Activated B cell treated with CpG ODN at 0.5 μM for 24 hours (primary cell): ENCODE measurements at regions of chr18 and their contacts with region 1.

Region 1: DNA sequence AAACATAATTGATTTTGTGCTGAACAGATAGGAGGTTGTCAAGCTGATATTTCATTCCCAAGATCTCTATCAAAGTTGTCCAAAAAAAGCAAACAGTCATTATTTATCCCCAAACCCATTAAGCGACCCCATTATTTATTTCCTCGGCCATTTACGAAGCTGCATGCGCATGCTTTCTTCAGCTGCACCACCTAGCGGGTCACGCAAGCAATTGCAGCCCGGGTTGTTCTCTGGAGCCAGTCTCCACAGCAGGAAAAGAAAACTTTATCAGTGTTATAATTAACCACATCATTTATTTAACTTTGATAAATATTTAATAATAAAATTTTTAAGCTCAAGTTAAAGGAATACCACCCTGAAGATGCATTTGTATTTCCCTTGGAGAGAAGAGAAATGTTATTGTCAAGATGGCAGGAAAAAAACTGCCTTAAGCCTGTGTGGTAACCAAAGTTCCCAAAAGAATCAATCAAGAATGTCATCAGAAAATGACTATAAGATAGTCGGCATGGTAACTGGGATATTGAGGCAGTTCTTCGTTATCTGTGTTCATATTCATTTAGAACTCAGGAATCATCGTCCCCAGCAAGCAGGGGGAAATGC is 304.7 kb downstream of the FBXO15 start:
- DNase-seq: no peak
- ATAC-seq: peak; percentile 52
- H3K4me3 Mint-ChIP-seq: peak overlapping the region; percentile 45
- H3K27ac Mint-ChIP-seq: no peak overlapping the region
- H3K4me1 Mint-ChIP-seq: peaks cover 3% of the 10 kb centered on the region
- H3K27me3 Mint-ChIP-seq: no peaks in the 10 kb centered on the region
- CTCF ChIP-seq: peak; percentile 88

Region 2: DNA sequence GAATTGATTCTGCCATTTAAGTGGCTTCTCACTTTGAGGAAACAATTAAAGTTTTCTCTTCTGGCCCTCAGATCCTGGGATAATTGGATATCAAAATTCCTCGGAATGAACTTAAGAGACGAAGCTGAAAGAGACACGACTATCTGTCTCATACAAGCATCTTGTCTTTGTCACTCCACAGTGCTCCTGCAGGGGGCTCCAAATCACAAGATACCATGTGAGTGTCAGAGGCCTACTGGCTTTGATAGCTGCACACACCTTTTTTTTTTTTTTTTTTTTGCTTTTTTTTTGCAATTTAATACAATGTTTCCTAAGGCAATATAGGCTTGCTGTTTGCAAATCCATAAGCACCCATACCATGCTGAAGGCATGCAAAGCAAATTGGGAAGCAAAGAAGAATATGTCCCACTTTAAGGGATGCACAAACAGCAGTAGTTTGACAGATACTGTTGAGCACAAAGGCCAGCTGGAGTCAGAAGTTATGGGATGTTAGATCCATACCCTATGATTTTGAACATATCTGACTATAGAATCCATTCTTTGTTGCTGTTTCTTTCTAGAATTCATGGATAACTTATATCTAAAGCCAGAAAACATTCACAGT is 1189.8 kb before region 1 on chr18:
- CTCF ChIA-PET with region 1: no interaction called
- POLR2A ChIA-PET with region 1: no interaction called
- intact Hi-C with region 1: loop called (anchors 1 kb)
- DNase-seq: no peak
- ATAC-seq: peak; percentile 58
- H3K4me3 Mint-ChIP-seq: no peak overlapping the region
- H3K27ac Mint-ChIP-seq: no peak overlapping the region
- H3K4me1 Mint-ChIP-seq: no peaks in the 10 kb centered on the region
- H3K27me3 Mint-ChIP-seq: no peaks in the 10 kb centered on the region
- CTCF ChIP-seq: no peak

Region 3: GRCh38 chr18:72700961-72701718 is 1141.8 kb before region 1 on chr18:
- CTCF ChIA-PET with region 1: no interaction called
- POLR2A ChIA-PET with region 1: no interaction called
- intact Hi-C with region 1: loop called (anchors 1 kb)
- DNase-seq: no peak
- ATAC-seq: no peak
- H3K4me3 Mint-ChIP-seq: no peak overlapping the region
- H3K27ac Mint-ChIP-seq: no peak overlapping the region
- H3K4me1 Mint-ChIP-seq: no peaks in the 10 kb centered on the region
- H3K27me3 Mint-ChIP-seq: no peaks in the 10 kb centered on the region
- CTCF ChIP-seq: no peak

Region 4: DNA sequence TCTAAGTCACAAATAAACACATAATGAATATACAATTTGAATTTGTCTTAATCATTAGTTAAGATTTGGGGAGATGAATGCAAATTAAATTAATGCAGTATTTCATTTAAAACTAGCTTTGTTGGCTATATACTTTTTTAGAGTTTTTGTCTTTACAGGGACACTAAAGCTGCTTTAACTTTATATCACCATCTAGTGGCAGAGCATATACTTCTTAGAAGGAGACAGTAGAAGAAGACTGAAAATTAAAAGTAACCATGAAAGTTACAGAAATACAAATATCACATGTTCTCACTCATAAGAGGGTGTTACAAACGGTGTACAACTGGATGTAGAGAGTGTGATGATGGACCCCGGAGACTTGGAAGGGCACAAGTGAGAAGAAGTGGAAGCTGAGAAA is 706.8 kb before region 1 on chr18:
- CTCF ChIA-PET with region 1: interaction called, 5 read pairs
- POLR2A ChIA-PET with region 1: no interaction called
- intact Hi-C with region 1: loop called (anchors 5 kb)
- DNase-seq: no peak
- ATAC-seq: no peak
- H3K4me3 Mint-ChIP-seq: no peak overlapping the region
- H3K27ac Mint-ChIP-seq: no peak overlapping the region
- H3K4me1 Mint-ChIP-seq: peaks cover 9% of the 10 kb centered on the region
- H3K27me3 Mint-ChIP-seq: no peaks in the 10 kb centered on the region
- CTCF ChIP-seq: no peak

Region 5: DNA sequence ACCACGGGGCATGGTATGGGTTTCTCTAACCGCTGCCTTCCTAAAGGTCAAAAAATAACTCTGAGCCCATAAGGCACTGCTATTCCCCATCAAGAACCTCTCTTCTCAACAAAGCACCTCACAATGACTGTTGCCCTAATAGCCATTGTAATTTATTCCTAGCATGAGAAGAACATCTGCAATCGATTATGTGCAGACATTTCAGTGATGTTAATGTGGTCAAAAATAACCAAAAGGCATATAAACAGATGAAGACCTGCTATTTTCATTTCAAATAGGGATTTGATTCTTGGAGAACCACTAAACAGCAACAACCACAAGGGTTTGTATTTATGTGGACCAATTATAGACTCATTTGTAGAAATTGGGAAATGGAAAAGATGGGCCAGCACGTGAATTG is 51.8 kb before region 1 on chr18:
- CTCF ChIA-PET with region 1: no interaction called
- POLR2A ChIA-PET with region 1: no interaction called
- intact Hi-C with region 1: no loop called
- DNase-seq: no peak
- ATAC-seq: no peak
- H3K4me3 Mint-ChIP-seq: no peak overlapping the region
- H3K27ac Mint-ChIP-seq: no peak overlapping the region
- H3K4me1 Mint-ChIP-seq: no peaks in the 10 kb centered on the region
- H3K27me3 Mint-ChIP-seq: no peaks in the 10 kb centered on the region
- CTCF ChIP-seq: no peak

Region 6: DNA sequence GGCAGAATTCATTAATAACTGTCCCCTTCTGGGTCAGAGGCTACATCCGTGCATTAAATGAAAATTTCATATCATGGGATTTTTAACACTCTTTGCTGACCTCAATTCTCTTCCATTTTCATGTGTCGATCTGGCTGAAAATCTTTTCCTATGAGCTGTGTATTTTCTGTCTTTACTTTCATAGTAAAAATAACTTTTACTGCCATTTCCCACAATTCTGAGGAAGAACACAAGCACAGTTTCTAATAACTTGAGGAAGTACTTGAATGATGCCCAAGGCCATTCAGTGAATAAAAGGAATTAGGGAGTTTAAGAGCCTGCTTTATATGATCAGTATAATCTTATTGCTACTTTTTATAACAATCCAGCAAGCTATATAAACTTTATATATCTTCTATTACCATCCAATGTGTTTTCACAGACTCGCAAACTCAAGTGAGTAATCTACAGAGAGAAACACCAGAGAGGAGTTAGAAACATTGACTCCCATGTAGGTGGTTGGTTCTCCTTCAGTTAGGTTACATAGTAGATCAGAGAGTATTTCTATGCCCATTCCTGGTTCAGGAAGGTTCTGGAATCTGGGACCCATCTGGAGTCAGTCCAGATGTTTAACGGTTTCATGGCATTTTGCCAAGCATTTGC is 35.2 kb before region 1 on chr18:
- CTCF ChIA-PET with region 1: interaction called, 4 read pairs
- POLR2A ChIA-PET with region 1: no interaction called
- intact Hi-C with region 1: loop called (anchors 1 kb)
- DNase-seq: no peak
- ATAC-seq: no peak
- H3K4me3 Mint-ChIP-seq: no peak overlapping the region
- H3K27ac Mint-ChIP-seq: no peak overlapping the region
- H3K4me1 Mint-ChIP-seq: no peaks in the 10 kb centered on the region
- H3K27me3 Mint-ChIP-seq: no peaks in the 10 kb centered on the region
- CTCF ChIP-seq: no peak